Naive thymus-derived CD8-positive, alpha-beta T cell (primary cell): ENCODE measurements at regions of chr5 and their contacts with region 1.

Region 1: GRCh38 chr5:95646554-95647431 is at the start of gene RFESD:
- DNase-seq: peak; percentile 85 to 95 (median 89)
- ATAC-seq: peak; percentile 92 to 93
- H3K4me3 Mint-ChIP-seq: peak within 1 kb of the TSS; percentile 84 to 94 (median 88)
- H3K27ac Mint-ChIP-seq: peak within 1 kb of the TSS; percentile 71 to 97 (median 94)
- H3K4me1 Mint-ChIP-seq: peaks cover 9 to 41% (median 26%) of the 10 kb centered on the region in 4 donors
- H3K27me3 Mint-ChIP-seq: no peaks in the 10 kb centered on the region
- polyA plus RNA-seq, gene RFESD: 7.2 to 13.4 (median 9.8) TPM

Region 2: DNA sequence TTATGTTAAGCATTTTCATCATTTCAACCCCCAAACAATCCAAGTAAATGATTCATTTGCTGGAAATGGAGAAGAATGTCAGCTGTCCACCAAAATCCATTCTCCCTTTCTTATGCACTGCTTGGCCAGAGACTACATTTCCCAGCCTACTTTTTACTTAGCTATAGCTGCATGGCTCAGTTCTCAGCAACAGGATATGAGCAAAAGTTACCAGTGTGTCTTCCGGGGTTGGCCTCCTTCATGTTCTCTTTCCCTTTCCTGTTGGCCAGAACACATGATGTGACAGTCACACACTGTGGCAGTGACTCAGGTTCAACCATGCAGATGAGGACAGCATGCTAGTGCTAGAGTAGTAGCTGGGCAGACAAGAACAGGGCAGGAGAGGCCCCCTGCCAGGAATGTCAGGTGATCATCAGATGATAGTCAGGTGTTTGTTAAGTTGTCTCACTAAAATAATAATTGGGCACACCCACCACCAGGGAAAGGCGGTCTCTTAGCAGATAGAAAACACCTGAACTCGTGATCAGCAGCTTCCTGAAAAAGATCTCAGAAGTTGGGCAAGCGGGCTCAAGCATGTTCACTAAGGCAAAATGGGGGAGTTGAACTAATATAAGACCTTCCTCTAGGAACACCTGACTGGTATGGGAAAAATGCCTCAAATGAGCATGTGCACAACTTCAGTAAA is 14.7 kb before region 1 on chr5:
- POLR2A ChIA-PET with region 1: interaction called, 27 read pairs
- DNase-seq: peak in 9 of 10 donors; percentile 37 to 81 (median 61)
- ATAC-seq: peak; percentile 100
- H3K4me3 Mint-ChIP-seq: peak overlapping the region in 8 of 10 donors; percentile 20 to 79 (median 44)
- H3K27ac Mint-ChIP-seq: peak overlapping the region; percentile 84 to 96 (median 92)
- H3K4me1 Mint-ChIP-seq: peaks cover 12 to 30% (median 20%) of the 10 kb centered on the region in 4 donors
- H3K27me3 Mint-ChIP-seq: no peaks in the 10 kb centered on the region

Region 3: GRCh38 chr5:95704150-95704549 is 57.4 kb after region 1 on chr5:
- POLR2A ChIA-PET with region 1: no interaction called
- DNase-seq: no peak
- ATAC-seq: no peak
- H3K4me3 Mint-ChIP-seq: no peak overlapping the region
- H3K27ac Mint-ChIP-seq: no peak overlapping the region
- H3K4me1 Mint-ChIP-seq: no peaks in the 10 kb centered on the region
- H3K27me3 Mint-ChIP-seq: peaks cover 0 to 6% (median 4%) of the 10 kb centered on the region in 5 donors